ENCODE measurements at regions of chr2 and their contacts with region 1.

Region 1: DNA sequence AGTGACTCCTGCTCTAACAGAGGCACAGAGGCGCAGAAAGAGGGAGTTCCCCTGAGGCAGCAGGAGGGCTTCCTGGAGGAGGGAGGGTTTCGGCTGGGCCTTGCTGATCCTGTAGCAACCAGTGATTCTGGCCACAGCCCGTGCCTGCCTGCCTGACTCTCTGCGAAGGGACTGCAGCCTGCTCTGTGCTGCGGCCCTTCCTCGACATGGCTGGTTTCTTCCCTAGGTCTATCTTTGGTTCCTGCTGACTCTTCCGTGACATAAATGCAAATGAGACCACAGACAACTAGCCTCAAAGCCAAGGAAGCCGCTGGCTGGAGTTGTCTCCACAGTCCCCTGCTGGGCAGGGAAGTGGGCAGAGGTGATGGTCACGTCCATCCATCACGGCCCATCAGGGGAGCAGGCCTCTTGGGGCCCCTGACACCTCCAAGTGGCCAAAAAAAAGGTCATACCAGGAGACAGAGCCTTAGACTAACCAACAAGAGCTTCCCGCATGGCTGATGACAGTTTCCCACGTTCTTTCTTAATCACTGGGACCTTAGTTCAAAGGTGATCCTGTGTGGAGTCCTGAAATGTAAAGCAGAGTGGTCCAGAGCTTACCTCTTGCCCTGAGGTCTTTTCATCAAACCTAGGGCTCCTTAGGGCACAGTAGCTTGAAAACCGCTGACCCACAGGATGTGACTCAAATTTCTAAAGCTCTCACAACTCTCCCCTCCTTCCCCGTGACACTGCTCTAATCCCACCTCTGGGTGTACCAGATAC is 55.3 kb downstream of the HS1BP3 start:
- DNase-seq: peak; percentile 77
- CTCF ChIP-seq: no peak

Region 2: GRCh38 chr2:20507166-20507692 is 88.4 kb before region 1 on chr2:
- CTCF ChIA-PET with region 1: no interaction called
- POLR2A ChIA-PET with region 1: no interaction called
- DNase-seq: peak; percentile 65
- CTCF ChIP-seq: no peak

Region 3: DNA sequence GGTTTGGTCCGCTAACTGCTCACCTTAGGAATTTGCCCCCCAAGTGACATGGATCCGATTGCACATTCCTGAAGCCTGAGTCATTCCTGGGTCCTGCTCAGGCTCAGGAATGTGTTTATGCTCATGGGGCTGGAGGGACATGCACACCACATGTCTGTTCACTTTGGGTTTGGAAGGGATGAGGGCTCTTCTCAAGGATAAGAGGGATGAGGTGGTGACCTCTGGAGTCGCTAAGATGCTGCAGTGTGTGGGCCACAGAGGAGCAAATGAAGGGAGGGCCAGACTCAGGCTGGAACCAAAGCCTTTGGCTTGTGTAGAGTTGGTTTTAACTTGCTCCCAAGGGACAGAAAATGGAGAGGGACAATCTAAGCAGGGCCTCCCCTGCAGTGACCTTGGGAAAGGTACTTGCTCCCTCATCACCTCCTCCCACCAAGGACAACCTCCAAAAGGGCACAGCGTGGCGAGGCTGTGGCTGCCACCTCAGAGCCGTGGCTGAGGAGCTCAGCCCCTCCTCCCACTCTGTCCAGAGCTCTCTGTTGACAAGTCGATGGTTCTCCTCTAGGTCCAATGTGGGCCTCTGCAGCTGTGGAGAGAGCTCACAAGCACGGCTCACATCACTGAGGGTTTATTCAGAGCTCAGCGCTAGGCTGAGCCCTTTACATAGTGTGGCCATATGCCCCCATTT is 10.8 kb before region 1 on chr2:
- CTCF ChIA-PET with region 1: interaction called, 10 read pairs
- POLR2A ChIA-PET with region 1: no interaction called
- DNase-seq: no peak
- CTCF ChIP-seq: no peak

Region 4: GRCh38 chr2:20617892-20618467 is 22.4 kb after region 1 on chr2:
- CTCF ChIA-PET with region 1: interaction called, 23 read pairs
- POLR2A ChIA-PET with region 1: no interaction called
- DNase-seq: no peak
- CTCF ChIP-seq: no peak